ENCODE measurements at regions of chr12 and their contacts with region 1.

Region 1: GRCh38 chr12:67819902-67820301 is 169.3 kb upstream of the IFNG-AS1 start:
- DNase-seq: no peak
- H3K4me3 ChIP-seq: no peak overlapping the region
- H3K27ac ChIP-seq: no peak overlapping the region
- H3K4me1 ChIP-seq: no peaks in the 10 kb centered on the region
- H3K27me3 ChIP-seq: no peaks in the 10 kb centered on the region
- CTCF ChIP-seq: no peak
- EP300 ChIP-seq: no peak
- POLR2A ChIP-seq: no peak

Region 2: GRCh38 chr12:67661311-67662021 is 158.4 kb before region 1 on chr12:
- intact Hi-C with region 1: loop called in 1 of 4 experiments (anchors 2 kb)
- DNase-seq: no peak
- H3K4me3 ChIP-seq: no peak overlapping the region
- H3K27ac ChIP-seq: no peak overlapping the region
- H3K4me1 ChIP-seq: peaks cover 7% of the 10 kb centered on the region
- H3K27me3 ChIP-seq: no peaks in the 10 kb centered on the region
- CTCF ChIP-seq: no peak
- EP300 ChIP-seq: no peak
- POLR2A ChIP-seq: no peak

Measured in ovary (tissue), 10 donors.